Right ventricle myocardium inferior (tissue), 1 donor: ENCODE measurements at regions of chr5 and their contacts with region 1.

Region 1: DNA sequence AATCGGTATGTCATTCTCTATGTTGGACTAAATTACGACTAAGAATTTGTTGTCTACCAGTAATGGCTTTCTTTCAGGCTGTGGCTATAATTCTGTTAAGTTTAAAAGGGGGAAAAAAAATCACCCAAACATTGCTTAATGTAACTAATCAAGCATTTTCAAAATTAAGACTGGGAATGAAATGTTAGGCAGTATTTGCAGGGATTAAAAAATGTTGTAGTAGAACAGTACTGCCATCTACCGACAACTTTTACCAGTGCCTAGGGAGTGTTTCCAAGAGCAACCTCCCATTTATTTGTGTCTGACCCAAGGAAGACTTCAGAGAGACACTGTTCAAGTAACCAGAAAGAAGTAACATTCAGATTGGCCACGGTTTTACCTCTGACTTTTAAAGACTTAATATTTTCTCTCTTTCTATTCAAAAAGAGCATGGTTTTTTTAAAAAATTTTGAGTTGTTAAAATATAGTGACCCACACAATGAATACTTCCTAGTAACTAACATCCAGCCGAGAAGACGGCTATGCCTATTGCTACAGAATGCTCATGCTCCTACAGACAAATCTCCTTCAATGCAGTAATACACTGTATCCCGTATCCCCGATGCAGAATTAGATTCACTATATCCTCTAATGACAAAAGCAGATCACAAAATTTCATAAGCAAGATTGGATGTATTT is 92.4 kb downstream of the ARL15 start:
- DNase-seq: no peak
- ATAC-seq: peak; percentile 76

Region 2: GRCh38 chr5:53892224-53892623 is 325.7 kb before region 1 on chr5:
- intact Hi-C with region 1: loop called (anchors 10 kb)
- DNase-seq: no peak
- ATAC-seq: no peak

Region 3: GRCh38 chr5:53991942-53992341 is 226.0 kb before region 1 on chr5:
- intact Hi-C with region 1: loop called (anchors 10 kb)
- DNase-seq: no peak
- ATAC-seq: no peak

Region 4: DNA sequence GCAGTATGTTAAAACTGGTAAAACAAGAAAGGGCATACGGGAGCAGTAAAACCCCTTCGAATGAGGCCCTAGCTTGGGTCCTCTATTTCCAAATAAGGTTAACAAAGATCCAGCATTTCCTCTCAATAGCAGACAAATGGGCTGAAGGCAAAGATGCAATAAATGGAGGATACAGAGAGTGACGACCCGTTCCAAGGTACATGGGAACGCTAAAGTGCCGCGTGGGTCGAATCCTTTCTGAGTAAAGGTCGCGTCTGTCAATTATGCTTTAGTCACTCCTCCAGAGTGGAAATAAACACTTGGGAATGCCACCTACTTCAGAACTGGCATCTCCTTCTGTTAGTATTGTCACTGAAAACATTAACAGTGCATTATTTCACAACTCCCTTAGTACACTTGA is 67.7 kb after region 1 on chr5:
- intact Hi-C with region 1: no loop called
- DNase-seq: no peak
- ATAC-seq: no peak